Activated CD4-positive, alpha-beta T cell treated with anti-CD3 and anti-CD28 coated beads for 36 hours (primary cell): ENCODE measurements at regions of chr17 and their contacts with region 1.

Region 1: GRCh38 chr17:28812091-28812747 is 30.4 kb downstream of the FAM222B start:
- DNase-seq: peak; percentile 99
- ATAC-seq: peak; percentile 99
- H3K4me3 Mint-ChIP-seq: peak overlapping the region; percentile 82
- H3K27ac Mint-ChIP-seq: peak overlapping the region; percentile 91
- H3K4me1 Mint-ChIP-seq: peaks cover 44% of the 10 kb centered on the region
- H3K27me3 Mint-ChIP-seq: no peaks in the 10 kb centered on the region

Region 2: GRCh38 chr17:28743225-28744103 is 68.8 kb before region 1 on chr17 and contains the start of gene TRAF4:
- CTCF ChIA-PET with region 1: interaction called, 4 read pairs
- POLR2A ChIA-PET with region 1: no interaction called
- intact Hi-C with region 1: loop called in 1 of 2 experiments (anchors 1 kb)
- DNase-seq: peak; percentile 89
- ATAC-seq: peak; percentile 91
- H3K4me3 Mint-ChIP-seq: peak within 1 kb of the TSS; percentile 87
- H3K27ac Mint-ChIP-seq: peak within 1 kb of the TSS; percentile 92
- H3K4me1 Mint-ChIP-seq: peaks cover 42% of the 10 kb centered on the region
- H3K27me3 Mint-ChIP-seq: no peaks in the 10 kb centered on the region
- total RNA-seq, gene TRAF4: 96.5 to 117 TPM

Region 3: DNA sequence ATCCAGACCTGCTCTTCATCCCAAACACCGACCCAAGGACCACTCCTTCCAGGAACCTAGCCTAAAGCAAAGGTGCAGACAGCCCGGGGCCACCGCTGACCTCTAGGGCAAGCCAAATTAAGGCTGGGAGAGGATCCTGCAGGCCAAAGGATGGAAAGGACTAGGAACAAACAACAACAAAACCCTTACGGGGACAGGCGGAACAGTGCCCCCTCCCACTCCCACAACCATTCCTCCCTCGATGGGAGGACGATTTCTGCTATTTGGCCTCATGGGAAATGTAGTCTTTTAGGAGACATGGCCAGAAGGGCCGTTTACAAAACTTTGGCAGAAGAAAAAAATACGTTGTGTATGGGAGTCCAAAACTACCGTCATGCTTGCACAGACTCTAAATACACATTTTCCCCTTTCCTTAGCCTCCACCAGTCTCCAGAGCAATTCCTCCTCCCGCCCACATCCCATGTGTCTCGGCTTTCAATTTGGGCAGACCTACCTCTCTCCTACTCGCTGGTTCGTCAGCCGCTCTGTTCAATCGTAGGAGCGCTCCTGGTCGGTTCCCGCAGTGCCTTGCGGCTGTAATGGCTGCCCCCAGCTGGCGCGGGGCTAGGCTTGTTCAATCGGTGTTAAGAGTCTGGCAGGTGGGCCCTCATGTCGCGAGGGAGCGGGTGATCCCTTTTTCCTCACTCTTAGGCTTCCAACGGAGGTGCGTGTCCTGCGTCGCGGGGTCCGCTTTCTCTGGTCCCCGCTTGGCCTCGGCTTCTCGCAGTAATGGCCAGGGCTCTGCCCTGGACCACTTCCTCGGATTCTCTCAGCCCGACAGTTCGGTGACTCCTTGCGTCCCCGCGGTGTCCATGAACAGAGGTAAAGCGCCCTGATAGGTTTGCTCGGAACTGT is 42.5 kb after region 1 on chr17 and contains the start of gene ERAL1:
- CTCF ChIA-PET with region 1: interaction called, 4 read pairs
- POLR2A ChIA-PET with region 1: no interaction called
- intact Hi-C with region 1: loop called (anchors 1 to 5 kb)
- DNase-seq: peak; percentile 93
- ATAC-seq: peak; percentile 100
- H3K4me3 Mint-ChIP-seq: peak within 1 kb of the TSS; percentile 80
- H3K27ac Mint-ChIP-seq: peak within 1 kb of the TSS; percentile 81
- H3K4me1 Mint-ChIP-seq: peaks cover 24% of the 10 kb centered on the region
- H3K27me3 Mint-ChIP-seq: no peaks in the 10 kb centered on the region
- total RNA-seq, gene ERAL1: 51.5 to 74.8 TPM

Region 4: DNA sequence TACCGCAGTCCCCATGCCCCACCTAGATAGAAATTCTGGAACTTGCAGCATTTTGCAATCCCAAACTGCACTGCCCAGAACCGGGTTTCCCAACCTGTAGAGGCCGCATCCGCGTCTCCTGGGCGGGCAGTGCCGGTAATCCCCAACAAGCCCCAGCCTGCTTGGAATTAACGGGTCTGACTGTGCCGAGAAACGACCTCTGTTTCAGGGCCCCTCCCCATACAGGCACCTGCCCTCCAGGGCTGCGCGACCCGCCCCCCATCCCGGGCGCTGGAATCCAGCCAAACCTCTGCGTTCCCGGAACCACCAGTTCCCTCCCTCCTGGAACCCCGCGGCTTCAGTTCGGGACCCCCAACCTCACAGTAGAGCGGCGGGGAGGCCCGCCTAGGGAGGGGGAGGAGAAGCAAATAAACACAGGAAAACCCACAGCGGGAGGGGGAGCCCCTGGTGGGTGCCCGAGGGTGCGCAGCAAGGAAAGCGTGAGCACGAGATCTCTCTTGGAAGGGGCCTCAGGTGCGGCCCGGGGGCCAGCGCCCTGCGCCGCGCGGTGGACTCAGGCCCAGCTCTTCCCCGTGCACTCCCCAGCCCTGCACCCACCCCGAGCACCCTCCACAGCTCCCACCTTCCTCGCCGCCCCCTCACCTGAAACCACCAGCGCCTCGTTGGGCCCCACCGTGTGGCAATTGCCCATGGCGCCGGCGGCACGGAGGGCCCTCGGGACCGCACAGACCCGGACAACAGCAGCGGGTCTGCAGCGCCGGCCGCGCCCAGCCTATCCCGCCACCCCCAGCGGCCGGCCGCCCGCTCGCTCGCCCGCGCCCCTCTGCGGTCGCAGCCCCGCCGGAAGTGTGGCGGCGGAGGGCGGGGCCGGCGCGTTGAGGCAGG is 84.9 kb after region 1 on chr17 and contains the start of gene FLOT2:
- CTCF ChIA-PET with region 1: interaction called, 5 read pairs
- POLR2A ChIA-PET with region 1: no interaction called
- intact Hi-C with region 1: loop called in 1 of 2 experiments (anchors 1 kb)
- DNase-seq: peak; percentile 84
- ATAC-seq: peak; percentile 59
- H3K4me3 Mint-ChIP-seq: peak within 1 kb of the TSS; percentile 93
- H3K27ac Mint-ChIP-seq: peak within 1 kb of the TSS; percentile 93
- H3K4me1 Mint-ChIP-seq: peaks cover 73% of the 10 kb centered on the region
- H3K27me3 Mint-ChIP-seq: no peaks in the 10 kb centered on the region
- total RNA-seq, gene FLOT2: 81.3 to 88.4 TPM

Region 5: DNA sequence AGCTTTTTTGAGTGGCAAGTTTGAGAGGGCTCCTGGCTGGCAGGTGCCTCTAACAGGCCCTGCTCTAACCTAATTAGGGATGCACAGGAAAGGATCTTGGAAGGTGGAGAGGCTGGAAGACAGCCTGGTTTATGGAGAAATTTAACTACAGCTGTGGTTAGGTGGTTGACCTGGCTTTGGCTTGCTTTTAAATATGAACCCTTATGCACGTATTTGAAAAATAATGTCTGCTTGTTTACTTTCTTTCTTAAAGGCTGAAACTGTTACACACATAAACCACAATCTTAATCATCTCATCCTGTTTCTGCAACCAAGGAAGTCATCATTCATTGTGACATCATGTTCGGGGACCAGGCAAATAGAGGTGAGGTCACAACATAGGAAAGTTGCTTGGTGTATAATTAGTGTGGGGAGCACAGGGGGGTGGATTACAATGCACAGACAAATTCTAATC is 113.7 kb after region 1 on chr17:
- CTCF ChIA-PET with region 1: interaction called, 3 read pairs
- POLR2A ChIA-PET with region 1: no interaction called
- intact Hi-C with region 1: loop called in 1 of 2 experiments (anchors 1 kb)
- DNase-seq: peak; percentile 51
- ATAC-seq: peak; percentile 84
- H3K4me3 Mint-ChIP-seq: peak overlapping the region; percentile 36
- H3K27ac Mint-ChIP-seq: peak overlapping the region; percentile 88
- H3K4me1 Mint-ChIP-seq: peaks cover 59% of the 10 kb centered on the region
- H3K27me3 Mint-ChIP-seq: no peaks in the 10 kb centered on the region